Naive thymus-derived CD4-positive, alpha-beta T cell (primary cell): ENCODE measurements at regions of chr5 and their contacts with region 1.

Region 1: GRCh38 chr5:80407735-80408482 is at the start of gene ZFYVE16:
- DNase-seq: peak; percentile 93 to 98 (median 94)
- ATAC-seq: peak; percentile 93
- H3K4me3 ChIP-seq: peak within 1 kb of the TSS; percentile 94
- H3K4me3 Mint-ChIP-seq: peak within 1 kb of the TSS; percentile 91 to 99 (median 96)
- H3K27ac ChIP-seq: peak within 1 kb of the TSS; percentile 85
- H3K27ac Mint-ChIP-seq: peak within 1 kb of the TSS; percentile 97 to 100 (median 99)
- H3K4me1 ChIP-seq: peaks cover 0 to 3% of the 10 kb centered on the region in 2 donors
- H3K4me1 Mint-ChIP-seq: peaks cover 20 to 32% (median 21%) of the 10 kb centered on the region in 7 donors
- H3K27me3 ChIP-seq: no peaks in the 10 kb centered on the region
- H3K27me3 Mint-ChIP-seq: peaks cover 0 to 7% (median 0%) of the 10 kb centered on the region in 5 donors
- total RNA-seq, gene ZFYVE16: 12.0 to 32.0 (median 26.0) TPM

Region 2: DNA sequence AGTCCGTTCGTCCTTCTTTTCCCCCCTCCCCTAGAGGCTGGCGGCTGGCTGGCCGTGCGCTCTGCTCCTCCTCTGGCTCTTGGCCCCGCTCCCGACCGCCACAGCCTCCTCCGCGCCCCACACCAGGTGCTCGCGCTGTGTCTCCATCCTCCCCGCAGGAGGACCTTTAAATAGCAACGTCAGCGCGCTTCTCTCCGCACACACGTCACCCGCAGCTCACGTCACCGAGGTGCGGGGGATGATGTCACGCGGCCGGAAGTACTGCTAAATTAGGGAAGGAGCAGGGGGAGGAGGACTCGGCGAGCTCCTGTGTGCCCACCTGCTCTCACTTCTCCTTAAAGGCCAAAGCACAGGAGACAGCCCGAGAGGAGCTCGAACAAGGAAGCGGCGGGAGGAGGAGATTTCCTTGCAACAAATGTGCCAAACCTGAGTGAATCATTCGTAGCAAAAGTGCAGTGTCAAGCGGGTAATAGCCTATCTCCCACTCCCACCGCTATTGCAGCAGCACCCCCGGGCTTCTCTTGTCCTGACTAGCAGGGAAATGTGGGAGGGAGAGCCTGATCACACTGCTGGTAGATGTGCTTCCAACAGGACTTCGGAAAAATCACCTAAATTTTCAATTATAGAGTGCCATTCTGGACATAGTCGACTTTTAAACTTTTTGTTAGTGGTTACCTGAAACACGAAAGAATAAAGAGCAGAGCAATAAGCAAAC is 893.4 kb before region 1 on chr5:
- CTCF ChIA-PET with region 1: no interaction called
- POLR2A ChIA-PET with region 1: no interaction called
- intact Hi-C with region 1: loop called (anchors 2 to 5 kb)
- DNase-seq: peak; percentile 80 to 94 (median 91)
- ATAC-seq: peak; percentile 91
- H3K4me3 ChIP-seq: peak overlapping the region; percentile 71
- H3K4me3 Mint-ChIP-seq: peak overlapping the region; percentile 88 to 99 (median 98)
- H3K27ac ChIP-seq: peak overlapping the region; percentile 97
- H3K27ac Mint-ChIP-seq: peak overlapping the region; percentile 93 to 99 (median 98)
- H3K4me1 ChIP-seq: peaks cover 4 to 26% of the 10 kb centered on the region in 2 donors
- H3K4me1 Mint-ChIP-seq: peaks cover 6 to 53% (median 40%) of the 10 kb centered on the region in 7 donors
- H3K27me3 ChIP-seq: peaks cover 0 to 7% of the 10 kb centered on the region in 2 donors
- H3K27me3 Mint-ChIP-seq: peaks cover 0 to 27% (median 23%) of the 10 kb centered on the region in 5 donors

Region 3: DNA sequence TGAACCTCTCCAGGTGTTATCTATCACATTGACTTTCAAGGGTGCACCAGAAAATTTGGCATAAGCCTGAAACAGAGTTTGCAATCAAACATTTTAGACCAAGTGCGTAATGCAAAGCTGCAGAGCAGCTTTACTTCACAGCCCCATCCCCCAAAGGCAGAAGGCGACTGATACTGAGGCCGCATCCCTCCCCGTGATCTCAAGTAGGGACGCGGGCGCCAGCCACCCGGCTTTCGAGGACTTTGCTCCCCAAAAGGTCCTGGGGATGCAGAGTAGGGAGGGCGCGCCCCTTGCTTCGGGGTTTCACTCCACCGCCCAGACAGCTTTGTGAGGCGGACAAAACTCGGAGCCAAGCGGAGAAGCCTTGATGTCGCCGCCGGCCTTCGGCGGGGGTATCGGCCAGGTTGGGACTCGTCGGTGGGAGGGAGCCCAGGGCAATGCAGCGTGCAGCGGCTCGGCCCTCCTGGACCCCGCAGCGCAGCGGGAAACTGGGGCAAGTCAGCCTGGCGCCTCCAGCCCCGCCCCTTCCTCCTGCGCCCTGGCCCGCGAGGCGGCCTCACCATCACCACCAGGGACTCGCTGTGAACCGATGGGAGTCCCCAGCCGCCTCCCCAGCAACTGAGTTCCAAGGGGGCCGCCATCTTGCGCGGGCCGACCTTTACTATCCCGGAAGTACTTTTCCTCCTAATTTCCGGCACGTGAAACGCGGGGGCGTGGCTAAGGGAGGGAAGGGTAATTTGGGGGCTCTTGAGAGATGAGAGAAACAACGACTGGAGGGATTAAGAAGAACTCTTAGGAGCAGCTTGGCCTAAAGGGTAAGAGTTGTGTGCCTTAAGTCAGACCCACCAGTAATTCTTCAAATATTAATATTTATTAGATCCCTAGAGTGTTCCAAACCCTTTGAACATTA is 417.1 kb before region 1 on chr5 and contains the start of gene MTX3:
- CTCF ChIA-PET with region 1: no interaction called
- POLR2A ChIA-PET with region 1: no interaction called
- intact Hi-C with region 1: loop called (anchors 2 kb)
- DNase-seq: peak; percentile 65 to 85 (median 82)
- ATAC-seq: peak; percentile 97
- H3K4me3 ChIP-seq: peak within 1 kb of the TSS; percentile 80
- H3K4me3 Mint-ChIP-seq: peak within 1 kb of the TSS; percentile 76 to 93 (median 88)
- H3K27ac ChIP-seq: peak within 1 kb of the TSS; percentile 75
- H3K27ac Mint-ChIP-seq: peak within 1 kb of the TSS; percentile 82 to 95 (median 92)
- H3K4me1 ChIP-seq: peaks cover 17 to 18% of the 10 kb centered on the region in 2 donors
- H3K4me1 Mint-ChIP-seq: peaks cover 17 to 47% (median 36%) of the 10 kb centered on the region in 7 donors
- H3K27me3 ChIP-seq: no peaks in the 10 kb centered on the region
- H3K27me3 Mint-ChIP-seq: peaks cover 0 to 13% (median 8%) of the 10 kb centered on the region in 5 donors
- total RNA-seq, gene MTX3: 12.9 to 31.0 (median 24.4) TPM

Region 4: DNA sequence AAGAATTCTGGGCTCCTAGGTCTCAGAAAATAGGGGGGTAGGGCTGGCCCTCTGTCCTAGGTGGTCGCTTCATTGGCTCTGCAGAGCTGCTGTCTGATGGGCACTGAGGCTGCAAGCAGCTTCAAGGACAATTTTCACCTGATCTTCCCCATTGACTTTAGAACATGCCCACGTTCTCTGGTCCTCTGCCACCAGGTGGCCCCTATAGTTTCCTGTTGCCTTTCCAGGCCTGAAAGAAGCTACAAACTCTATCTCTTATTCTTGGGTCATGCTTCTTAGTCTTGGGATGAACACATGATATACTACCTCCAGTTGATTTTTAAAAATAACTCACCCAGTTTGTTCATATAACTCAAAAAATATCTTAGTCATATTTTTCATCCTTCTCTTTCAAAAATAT is 61.9 kb before region 1 on chr5:
- CTCF ChIA-PET with region 1: no interaction called
- POLR2A ChIA-PET with region 1: no interaction called
- intact Hi-C with region 1: loop called in 1 of 2 experiments (anchors 1 kb)
- DNase-seq: peak in 8 of 9 donors; percentile 6 to 44 (median 30)
- ATAC-seq: peak; percentile 63
- H3K4me3 ChIP-seq: no peak overlapping the region
- H3K4me3 Mint-ChIP-seq: no peak overlapping the region
- H3K27ac ChIP-seq: no peak overlapping the region
- H3K27ac Mint-ChIP-seq: no peak overlapping the region
- H3K4me1 ChIP-seq: no peaks in the 10 kb centered on the region
- H3K4me1 Mint-ChIP-seq: peaks cover 0 to 6% (median 3%) of the 10 kb centered on the region in 7 donors
- H3K27me3 ChIP-seq: no peaks in the 10 kb centered on the region
- H3K27me3 Mint-ChIP-seq: peaks cover 6 to 11% (median 8%) of the 10 kb centered on the region in 5 donors

Region 5: GRCh38 chr5:80754900-80755299 is 347.0 kb after region 1 on chr5:
- CTCF ChIA-PET with region 1: no interaction called
- POLR2A ChIA-PET with region 1: no interaction called
- intact Hi-C with region 1: loop called in 1 of 2 experiments (anchors 2 kb)
- DNase-seq: peak in 2 of 9 donors; percentile 11 to 49
- ATAC-seq: no peak
- H3K4me3 ChIP-seq: peak overlapping the region; percentile 7
- H3K4me3 Mint-ChIP-seq: peak overlapping the region; percentile 49 to 87 (median 78)
- H3K27ac ChIP-seq: peak overlapping the region; percentile 57
- H3K27ac Mint-ChIP-seq: peak overlapping the region; percentile 45 to 93 (median 79)
- H3K4me1 ChIP-seq: peaks cover 20 to 28% of the 10 kb centered on the region in 2 donors
- H3K4me1 Mint-ChIP-seq: peaks cover 30 to 61% (median 47%) of the 10 kb centered on the region in 7 donors
- H3K27me3 ChIP-seq: no peaks in the 10 kb centered on the region
- H3K27me3 Mint-ChIP-seq: no peaks in the 10 kb centered on the region

Region 6: GRCh38 chr5:81971712-81972495 is 1564.0 kb after region 1 on chr5 and contains the start of gene ATG10:
- CTCF ChIA-PET with region 1: no interaction called
- POLR2A ChIA-PET with region 1: no interaction called
- intact Hi-C with region 1: loop called in 1 of 2 experiments (anchors 5 kb)
- DNase-seq: peak; percentile 78 to 93 (median 84)
- ATAC-seq: peak; percentile 95
- H3K4me3 ChIP-seq: peak within 1 kb of the TSS; percentile 67
- H3K4me3 Mint-ChIP-seq: peak within 1 kb of the TSS; percentile 91 to 100 (median 97)
- H3K27ac ChIP-seq: peak within 1 kb of the TSS; percentile 97
- H3K27ac Mint-ChIP-seq: peak within 1 kb of the TSS; percentile 95 to 99 (median 99)
- H3K4me1 ChIP-seq: peaks cover 5 to 10% of the 10 kb centered on the region in 2 donors
- H3K4me1 Mint-ChIP-seq: peaks cover 9 to 40% (median 33%) of the 10 kb centered on the region in 7 donors
- H3K27me3 ChIP-seq: no peaks in the 10 kb centered on the region
- H3K27me3 Mint-ChIP-seq: no peaks in the 10 kb centered on the region
- total RNA-seq, gene ATG10: 6.4 to 9.6 (median 8.2) TPM